Gastrocnemius medialis (tissue), 4 donors: ENCODE measurements at regions of chr12 and their contacts with region 1.

Region 1: GRCh38 chr12:6890789-6891645 is 13.6 kb upstream of the LRRC23 start:
- DNase-seq: peak; percentile 92 to 95
- ATAC-seq: peak; percentile 99
- H3K4me3 ChIP-seq: peak overlapping the region; percentile 60 to 83 (median 68)
- H3K27ac ChIP-seq: peak overlapping the region; percentile 85 to 92 (median 87)
- H3K4me1 ChIP-seq: peaks cover 10% of the 10 kb centered on the region in 2 donors
- H3K27me3 ChIP-seq: no peaks in the 10 kb centered on the region
- CTCF ChIP-seq: peak; percentile 78 to 94 (median 87)
- POLR2A ChIP-seq: peak; percentile 53 to 56

Region 2: DNA sequence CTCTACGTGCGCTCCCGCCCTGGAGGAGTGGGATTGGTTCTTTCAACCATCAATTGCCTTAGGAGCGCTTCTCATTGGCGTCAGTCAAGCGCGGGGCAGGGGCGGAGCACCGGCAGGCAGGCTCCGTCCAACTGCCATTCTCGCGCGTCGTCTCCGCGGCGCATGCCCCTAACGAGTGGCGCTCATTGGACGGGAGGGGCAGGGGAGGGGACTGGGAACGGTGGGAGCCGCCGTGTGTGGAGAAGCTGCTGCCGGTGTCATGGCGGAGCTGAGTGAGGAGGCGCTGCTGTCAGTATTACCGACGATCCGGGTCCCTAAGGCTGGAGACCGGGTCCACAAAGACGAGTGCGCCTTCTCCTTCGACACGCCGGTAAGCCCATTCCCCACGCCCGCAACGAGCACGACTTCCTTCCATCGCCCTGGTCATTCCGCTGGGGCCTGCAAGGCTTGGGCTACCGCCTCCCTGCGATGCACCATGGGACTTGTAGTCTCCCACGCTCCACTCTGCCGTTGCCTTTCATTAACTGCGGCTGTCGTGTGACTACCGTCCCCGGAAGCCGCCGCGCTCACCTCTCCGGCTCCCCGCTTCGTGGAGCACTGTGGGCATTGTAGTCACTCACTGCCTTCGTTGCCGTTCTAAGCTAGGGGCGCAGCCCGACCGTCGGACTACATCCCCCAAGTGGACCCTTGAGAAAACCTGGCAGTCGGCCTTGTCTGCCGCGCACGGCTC is 38.9 kb before region 1 on chr12 and contains the start of gene USP5:
- in situ Hi-C with region 1: no loop called
- intact Hi-C with region 1: loop called (anchors 1 kb)
- DNase-seq: peak; percentile 99
- ATAC-seq: peak; percentile 85 to 88
- H3K4me3 ChIP-seq: peak within 1 kb of the TSS; percentile 68 to 83 (median 74)
- H3K27ac ChIP-seq: peak within 1 kb of the TSS; percentile 86 to 97 (median 92)
- H3K4me1 ChIP-seq: peaks cover 13 to 17% of the 10 kb centered on the region in 2 donors
- H3K27me3 ChIP-seq: no peaks in the 10 kb centered on the region
- CTCF ChIP-seq: peak in 2 of 5 experiments; percentile 13 to 23
- POLR2A ChIP-seq: peak in 1 of 2 donors; percentile 64
- total RNA-seq, gene USP5: 66.4 to 120 (median 74.1) TPM

Region 3: DNA sequence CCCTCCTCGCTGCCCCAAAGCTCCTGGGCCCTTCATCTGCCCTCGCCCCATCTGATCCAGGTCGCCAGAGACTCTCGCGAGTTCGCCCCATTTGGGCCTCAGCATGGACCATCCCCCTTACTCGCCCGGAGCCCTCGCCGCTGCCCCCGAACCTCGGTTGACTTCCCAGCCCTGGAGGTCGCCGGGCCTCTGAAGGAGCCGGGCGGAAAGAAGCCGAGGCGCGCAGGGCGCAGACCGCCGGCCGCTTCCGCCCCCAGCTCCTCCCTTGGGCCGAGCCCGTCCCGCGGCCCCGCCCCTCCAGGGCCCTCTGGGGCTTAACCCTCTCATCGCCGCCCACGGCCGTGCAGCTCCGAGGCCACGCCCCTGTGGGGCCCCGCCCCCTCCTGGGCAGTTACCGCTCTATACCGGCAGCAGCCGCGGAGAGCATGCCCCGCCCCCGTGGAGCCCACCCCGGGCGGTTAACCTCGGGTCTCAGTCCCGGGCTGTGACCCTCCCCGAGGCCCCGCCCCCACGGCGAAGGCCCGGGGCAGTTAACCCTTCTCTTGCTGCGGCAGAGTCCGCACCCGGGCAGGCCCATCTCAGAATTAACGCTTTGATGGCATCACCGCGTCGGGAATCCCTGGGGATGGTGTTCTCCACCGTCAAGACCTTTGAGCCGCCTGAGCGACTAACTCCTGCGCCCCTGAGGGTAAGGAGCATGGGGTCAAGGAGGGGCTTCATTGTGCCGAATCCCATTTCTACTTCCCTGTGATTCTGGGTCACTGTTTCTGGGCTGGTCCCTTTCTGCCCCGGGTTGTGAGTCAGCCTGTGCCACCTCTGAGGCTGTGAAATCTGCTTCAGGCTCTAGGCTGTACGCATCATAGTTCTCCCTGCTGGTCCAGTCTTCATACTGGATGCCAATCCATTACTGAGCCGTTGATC is 17.7 kb before region 1 on chr12 and contains the start of gene SPSB2:
- in situ Hi-C with region 1: no loop called
- intact Hi-C with region 1: loop called (anchors 1 kb)
- DNase-seq: peak; percentile 91 to 93
- ATAC-seq: peak; percentile 81 to 82
- H3K4me3 ChIP-seq: peak within 1 kb of the TSS; percentile 84 to 96 (median 90)
- H3K27ac ChIP-seq: peak within 1 kb of the TSS; percentile 82 to 100 (median 90)
- H3K4me1 ChIP-seq: peaks cover 29% of the 10 kb centered on the region in 2 donors
- H3K27me3 ChIP-seq: no peaks in the 10 kb centered on the region
- CTCF ChIP-seq: no peak
- POLR2A ChIP-seq: peak; percentile 75 to 79
- total RNA-seq, gene SPSB2: 4.6 to 10.0 (median 5.0) TPM

Region 4: GRCh38 chr12:6904280-6905278 is 13.6 kb after region 1 on chr12 and contains the start of gene LRRC23:
- in situ Hi-C with region 1: no loop called
- intact Hi-C with region 1: loop called (anchors 1 kb)
- DNase-seq: peak; percentile 91 to 94
- ATAC-seq: peak; percentile 98 to 99
- H3K4me3 ChIP-seq: peak within 1 kb of the TSS; percentile 67 to 91 (median 81)
- H3K27ac ChIP-seq: peak within 1 kb of the TSS; percentile 69 to 82 (median 78)
- H3K4me1 ChIP-seq: peaks cover 9 to 12% of the 10 kb centered on the region in 2 donors
- H3K27me3 ChIP-seq: no peaks in the 10 kb centered on the region
- CTCF ChIP-seq: no peak
- POLR2A ChIP-seq: peak in 1 of 2 donors; percentile 32
- total RNA-seq, gene LRRC23: 6.5 to 14.0 (median 11.0) TPM